CD4-positive, alpha-beta memory T cell (primary cell): ENCODE measurements at regions of chr3 and their contacts with region 1.

Region 1: DNA sequence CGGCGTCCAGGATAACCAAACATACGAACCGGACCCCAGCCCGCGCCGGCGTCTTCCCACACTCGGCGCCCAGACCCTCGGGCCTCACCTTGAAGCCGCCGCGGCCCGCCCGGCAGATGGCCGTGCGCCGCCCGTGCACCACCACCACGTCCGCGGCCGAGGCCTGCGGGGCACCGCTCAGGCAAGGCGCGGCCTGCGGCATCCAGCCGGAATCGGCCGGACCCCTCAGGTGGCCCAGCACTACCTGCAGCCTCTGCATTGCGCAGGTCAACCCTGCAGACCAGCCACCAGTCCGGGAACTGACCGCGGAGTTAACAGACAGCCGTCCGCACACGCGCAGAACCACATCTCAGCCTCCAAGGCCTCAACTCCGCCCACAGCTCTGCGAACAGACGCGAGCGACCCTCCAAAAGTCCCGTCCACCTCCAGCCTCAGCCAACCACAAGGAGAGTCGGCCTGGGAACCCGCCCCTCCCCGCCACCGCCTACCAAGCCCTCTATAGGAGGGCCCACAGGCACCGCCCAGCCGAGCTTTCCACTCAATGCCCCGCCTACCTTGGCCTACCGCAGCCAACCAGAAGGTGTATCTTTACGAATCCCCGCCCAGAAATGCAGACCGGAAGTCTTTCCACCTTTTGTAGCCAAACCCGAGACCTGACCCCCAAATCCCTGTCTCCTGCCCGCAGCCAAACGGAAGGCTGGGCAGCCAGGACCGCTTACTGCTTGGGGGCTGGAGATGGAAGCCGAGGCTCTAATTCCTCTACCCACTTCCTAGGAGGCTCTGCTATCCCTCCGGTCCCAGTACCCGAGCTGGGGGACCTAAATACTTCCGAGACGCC is at the start of gene ACAA1:
- DNase-seq: peak; percentile 92 to 98 (median 94)
- H3K4me3 ChIP-seq: peak within 1 kb of the TSS; percentile 92 to 95
- H3K4me3 Mint-ChIP-seq: peak within 1 kb of the TSS; percentile 92 to 100 (median 98)
- H3K27ac ChIP-seq: peak within 1 kb of the TSS; percentile 86
- H3K27ac Mint-ChIP-seq: peak within 1 kb of the TSS; percentile 88 to 100 (median 98)
- H3K4me1 ChIP-seq: peaks cover 78% of the 10 kb centered on the region
- H3K4me1 Mint-ChIP-seq: peaks cover 47 to 87% (median 68%) of the 10 kb centered on the region in 4 donors
- H3K27me3 ChIP-seq: no peaks in the 10 kb centered on the region
- H3K27me3 Mint-ChIP-seq: no peaks in the 10 kb centered on the region
- total RNA-seq, gene ACAA1: 78.7 to 82.8 TPM

Region 2: GRCh38 chr3:37996785-37997301 is 140.2 kb before region 1 on chr3:
- CTCF ChIA-PET with region 1: no interaction called
- POLR2A ChIA-PET with region 1: interaction called, 7 read pairs
- intact Hi-C with region 1: loop called (anchors 1 kb)
- DNase-seq: peak; percentile 80 to 85 (median 82)
- H3K4me3 ChIP-seq: no peak overlapping the region
- H3K4me3 Mint-ChIP-seq: peak overlapping the region; percentile 45 to 97 (median 68)
- H3K27ac ChIP-seq: peak overlapping the region; percentile 29
- H3K27ac Mint-ChIP-seq: peak overlapping the region; percentile 87 to 98 (median 96)
- H3K4me1 ChIP-seq: peaks cover 60% of the 10 kb centered on the region
- H3K4me1 Mint-ChIP-seq: peaks cover 53 to 78% (median 63%) of the 10 kb centered on the region in 4 donors
- H3K27me3 ChIP-seq: no peaks in the 10 kb centered on the region
- H3K27me3 Mint-ChIP-seq: no peaks in the 10 kb centered on the region

Region 3: GRCh38 chr3:38039101-38039898 is 97.7 kb before region 1 on chr3 and contains the start of gene DLEC1:
- CTCF ChIA-PET with region 1: interaction called, 4 read pairs
- POLR2A ChIA-PET with region 1: interaction called, 29 read pairs
- intact Hi-C with region 1: no loop called
- DNase-seq: peak; percentile 88 to 93 (median 91)
- H3K4me3 ChIP-seq: peak within 1 kb of the TSS; percentile 44 to 78
- H3K4me3 Mint-ChIP-seq: peak within 1 kb of the TSS; percentile 57 to 94 (median 85)
- H3K27ac ChIP-seq: peak within 1 kb of the TSS; percentile 85
- H3K27ac Mint-ChIP-seq: peak within 1 kb of the TSS; percentile 90 to 99 (median 97)
- H3K4me1 ChIP-seq: peaks cover 38% of the 10 kb centered on the region
- H3K4me1 Mint-ChIP-seq: peaks cover 23 to 45% (median 32%) of the 10 kb centered on the region in 4 donors
- H3K27me3 ChIP-seq: no peaks in the 10 kb centered on the region
- H3K27me3 Mint-ChIP-seq: no peaks in the 10 kb centered on the region
- total RNA-seq, gene DLEC1: 13.2 to 15.1 TPM

Region 4: DNA sequence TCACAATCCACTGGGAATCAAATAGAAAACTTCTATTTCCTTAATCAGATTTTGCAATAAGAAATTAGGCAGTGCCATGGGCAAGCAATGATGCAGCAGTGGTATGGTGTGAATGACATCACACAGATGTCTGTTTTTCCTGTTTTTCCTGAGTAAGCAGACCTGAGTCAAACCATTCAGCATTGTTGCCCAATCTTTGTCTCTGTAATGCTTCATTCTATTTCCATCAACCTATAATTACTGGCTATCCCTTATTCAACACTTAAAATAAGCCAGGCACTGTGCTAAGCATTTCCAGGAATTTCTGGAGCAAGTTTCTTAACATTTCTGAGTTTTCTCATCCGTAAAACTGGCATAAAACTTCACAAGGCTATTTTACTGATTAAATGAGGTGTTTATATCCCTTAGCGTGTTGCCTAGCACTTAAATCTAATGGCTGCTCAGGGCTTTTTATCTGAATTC is 17.1 kb after region 1 on chr3:
- CTCF ChIA-PET with region 1: interaction called, 4 read pairs
- POLR2A ChIA-PET with region 1: interaction called, 30 read pairs
- intact Hi-C with region 1: loop called (anchors 1 kb)
- DNase-seq: no peak
- H3K4me3 ChIP-seq: no peak overlapping the region
- H3K4me3 Mint-ChIP-seq: no peak overlapping the region
- H3K27ac ChIP-seq: no peak overlapping the region
- H3K27ac Mint-ChIP-seq: no peak overlapping the region
- H3K4me1 ChIP-seq: peaks cover 23% of the 10 kb centered on the region
- H3K4me1 Mint-ChIP-seq: peaks cover 17 to 28% (median 21%) of the 10 kb centered on the region in 4 donors
- H3K27me3 ChIP-seq: no peaks in the 10 kb centered on the region
- H3K27me3 Mint-ChIP-seq: no peaks in the 10 kb centered on the region

Region 5: DNA sequence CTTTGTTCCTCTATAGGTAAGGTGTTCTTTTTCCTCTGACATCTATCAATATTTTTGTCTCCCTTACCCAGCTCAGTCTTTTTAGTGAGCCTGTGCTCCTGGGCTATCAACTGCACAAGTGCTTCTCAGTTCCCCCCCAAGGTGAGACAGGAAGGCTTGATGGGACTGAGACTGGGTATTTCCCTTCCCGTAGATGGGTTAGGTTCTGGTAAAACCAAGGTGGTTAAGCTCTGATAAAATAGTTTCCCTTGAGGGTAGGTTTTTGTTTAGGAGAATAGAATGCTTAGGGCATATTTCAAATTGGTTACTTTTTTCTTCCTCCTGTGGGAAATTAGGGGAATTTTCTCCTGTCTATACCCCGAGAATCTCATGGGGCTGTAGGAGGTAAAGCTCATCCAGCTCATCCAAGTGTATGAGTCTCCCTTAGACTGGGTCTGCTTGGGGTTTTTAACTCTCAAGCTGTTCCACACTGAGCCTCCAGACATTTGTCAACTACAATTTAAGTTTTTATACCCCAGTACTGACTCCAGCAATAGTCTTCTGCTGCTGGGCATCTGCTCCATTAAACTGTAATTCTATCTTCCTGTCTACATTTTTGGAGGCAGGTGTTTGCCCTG is 73.3 kb after region 1 on chr3:
- CTCF ChIA-PET with region 1: no interaction called
- POLR2A ChIA-PET with region 1: interaction called, 3 read pairs
- intact Hi-C with region 1: loop called (anchors 5 kb)
- DNase-seq: peak in 1 of 5 donors; percentile 19
- H3K4me3 ChIP-seq: no peak overlapping the region
- H3K4me3 Mint-ChIP-seq: peak overlapping the region in 4 of 8 donors; percentile 3 to 41 (median 15)
- H3K27ac ChIP-seq: no peak overlapping the region
- H3K27ac Mint-ChIP-seq: peak overlapping the region in 6 of 7 donors; percentile 23 to 79 (median 34)
- H3K4me1 ChIP-seq: peaks cover 34% of the 10 kb centered on the region
- H3K4me1 Mint-ChIP-seq: peaks cover 38 to 70% (median 55%) of the 10 kb centered on the region in 4 donors
- H3K27me3 ChIP-seq: no peaks in the 10 kb centered on the region
- H3K27me3 Mint-ChIP-seq: no peaks in the 10 kb centered on the region

Region 6: GRCh38 chr3:38453075-38453912 is 316.3 kb after region 1 on chr3 and contains the start of gene ACVR2B:
- CTCF ChIA-PET with region 1: no interaction called
- POLR2A ChIA-PET with region 1: interaction called, 4 read pairs
- intact Hi-C with region 1: loop called (anchors 10 kb)
- DNase-seq: peak; percentile 56 to 62 (median 57)
- H3K4me3 ChIP-seq: peak within 1 kb of the TSS; percentile 72 to 78
- H3K4me3 Mint-ChIP-seq: peak within 1 kb of the TSS; percentile 96 to 100 (median 97)
- H3K27ac ChIP-seq: peak within 1 kb of the TSS; percentile 31
- H3K27ac Mint-ChIP-seq: peak within 1 kb of the TSS; percentile 41 to 95 (median 92)
- H3K4me1 ChIP-seq: peaks cover 17% of the 10 kb centered on the region
- H3K4me1 Mint-ChIP-seq: peaks cover 10 to 39% (median 19%) of the 10 kb centered on the region in 4 donors
- H3K27me3 ChIP-seq: no peaks in the 10 kb centered on the region
- H3K27me3 Mint-ChIP-seq: no peaks in the 10 kb centered on the region
- total RNA-seq, gene ACVR2B: 12.3 to 13.2 TPM

Region 7: DNA sequence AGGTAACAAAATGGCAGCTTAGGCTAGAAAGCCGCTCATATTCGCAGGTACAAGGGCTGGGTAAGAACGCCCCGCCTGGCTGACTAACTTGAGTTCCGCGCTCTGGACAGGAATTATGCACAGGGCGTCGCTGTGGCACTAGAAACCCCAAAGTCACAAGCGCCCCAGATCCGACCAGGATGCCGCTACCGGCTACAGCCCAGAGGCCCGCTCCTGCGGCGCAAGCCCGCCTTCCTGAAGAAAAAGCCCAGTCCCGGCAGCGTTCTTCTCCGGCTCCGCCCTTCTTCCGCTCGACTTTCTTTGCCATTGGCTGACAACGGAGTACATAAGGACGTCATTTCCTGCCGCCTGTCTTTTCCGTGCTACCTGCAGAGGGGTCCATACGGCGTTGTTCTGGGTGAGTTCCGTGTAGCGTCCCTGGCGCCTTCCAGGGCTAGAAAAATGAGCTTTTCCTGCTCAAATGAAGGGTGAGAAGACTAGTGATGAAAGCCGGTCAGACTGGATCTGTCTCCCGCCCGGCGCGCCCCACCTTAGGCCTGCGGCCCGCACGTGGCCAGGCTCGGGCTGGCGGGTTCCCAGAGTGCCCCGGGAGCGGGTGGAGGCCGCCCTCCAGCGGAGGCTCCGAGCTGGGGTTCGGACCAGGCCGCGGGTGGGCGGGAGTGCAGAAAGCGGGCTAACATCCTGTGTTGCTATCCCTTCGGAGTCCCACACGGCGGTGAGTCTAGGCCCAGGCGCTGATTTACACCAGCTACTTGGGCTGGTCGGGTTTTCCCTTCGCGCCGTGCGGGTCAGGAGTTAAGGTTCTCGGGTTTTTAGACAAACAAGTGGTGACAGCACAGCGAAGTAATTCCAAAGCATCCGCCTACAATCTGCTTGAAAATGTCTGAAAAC is 1269.6 kb after region 1 on chr3 and contains the start of gene RPSA:
- CTCF ChIA-PET with region 1: no interaction called
- POLR2A ChIA-PET with region 1: no interaction called
- intact Hi-C with region 1: loop called (anchors 10 kb)
- DNase-seq: peak; percentile 91 to 99 (median 99)
- H3K4me3 ChIP-seq: peak within 1 kb of the TSS; percentile 31 to 72
- H3K4me3 Mint-ChIP-seq: peak within 1 kb of the TSS; percentile 88 to 99 (median 96)
- H3K27ac ChIP-seq: peak within 1 kb of the TSS; percentile 81
- H3K27ac Mint-ChIP-seq: peak within 1 kb of the TSS; percentile 88 to 99 (median 98)
- H3K4me1 ChIP-seq: peaks cover 47% of the 10 kb centered on the region
- H3K4me1 Mint-ChIP-seq: peaks cover 30 to 54% (median 43%) of the 10 kb centered on the region in 4 donors
- H3K27me3 ChIP-seq: no peaks in the 10 kb centered on the region
- H3K27me3 Mint-ChIP-seq: no peaks in the 10 kb centered on the region
- total RNA-seq, gene RPSA: 1,582 to 1,688 TPM